ENCODE measurements at regions of chr10 and their contacts with region 1.

Region 1: GRCh38 chr10:72297968-72298773 is 24.4 kb downstream of the DDIT4 start:
- DNase-seq: peak; percentile 96
- H3K4me3 Mint-ChIP-seq: peak overlapping the region; percentile 73
- H3K27ac Mint-ChIP-seq: peak overlapping the region; percentile 97
- H3K4me1 Mint-ChIP-seq: peaks cover 66% of the 10 kb centered on the region
- H3K27me3 Mint-ChIP-seq: no peaks in the 10 kb centered on the region

Region 2: DNA sequence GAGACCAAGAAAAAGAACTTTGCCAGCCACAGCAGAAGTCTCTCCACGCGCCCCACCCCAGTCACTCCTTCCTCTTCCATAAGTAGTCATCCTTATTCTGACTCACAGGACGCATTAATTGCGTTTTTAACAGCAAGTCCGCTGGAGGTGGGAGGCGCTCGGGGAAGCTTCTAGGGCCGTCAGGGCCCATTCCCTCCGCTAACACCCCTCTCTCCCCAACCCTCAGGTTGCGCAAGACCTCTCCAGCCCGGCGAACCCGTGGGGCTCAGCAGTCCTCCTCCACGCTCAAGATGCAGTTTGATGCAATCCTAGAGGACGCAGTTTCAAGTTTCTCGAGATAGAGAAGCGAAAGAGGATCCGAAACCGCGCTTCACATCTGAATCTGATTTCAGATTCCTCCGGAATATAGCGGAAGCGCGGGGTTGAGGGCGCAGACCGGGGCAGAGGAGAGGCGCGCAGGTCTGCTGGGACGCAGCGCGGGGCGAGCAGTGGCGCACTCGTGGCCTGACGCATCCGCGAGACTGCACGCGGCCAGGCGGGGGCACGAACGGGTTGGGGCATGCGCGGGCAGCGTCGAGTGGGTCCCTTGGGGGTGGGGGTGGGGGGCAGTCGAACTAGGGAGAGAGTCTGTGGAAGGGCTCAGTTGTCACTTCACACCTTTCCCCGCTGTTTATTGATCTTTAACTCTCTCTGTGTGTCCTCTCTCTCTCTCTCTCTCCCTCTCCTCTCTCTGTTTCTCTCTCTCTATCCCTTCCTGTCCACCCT is 409.4 kb before region 1 on chr10:
- CTCF ChIA-PET with region 1: no interaction called
- POLR2A ChIA-PET with region 1: no interaction called
- DNase-seq: peak; percentile 63
- H3K4me3 Mint-ChIP-seq: peak overlapping the region; percentile 71
- H3K27ac Mint-ChIP-seq: no peak overlapping the region
- H3K4me1 Mint-ChIP-seq: peaks cover 10% of the 10 kb centered on the region
- H3K27me3 Mint-ChIP-seq: peaks cover 22% of the 10 kb centered on the region

Region 3: DNA sequence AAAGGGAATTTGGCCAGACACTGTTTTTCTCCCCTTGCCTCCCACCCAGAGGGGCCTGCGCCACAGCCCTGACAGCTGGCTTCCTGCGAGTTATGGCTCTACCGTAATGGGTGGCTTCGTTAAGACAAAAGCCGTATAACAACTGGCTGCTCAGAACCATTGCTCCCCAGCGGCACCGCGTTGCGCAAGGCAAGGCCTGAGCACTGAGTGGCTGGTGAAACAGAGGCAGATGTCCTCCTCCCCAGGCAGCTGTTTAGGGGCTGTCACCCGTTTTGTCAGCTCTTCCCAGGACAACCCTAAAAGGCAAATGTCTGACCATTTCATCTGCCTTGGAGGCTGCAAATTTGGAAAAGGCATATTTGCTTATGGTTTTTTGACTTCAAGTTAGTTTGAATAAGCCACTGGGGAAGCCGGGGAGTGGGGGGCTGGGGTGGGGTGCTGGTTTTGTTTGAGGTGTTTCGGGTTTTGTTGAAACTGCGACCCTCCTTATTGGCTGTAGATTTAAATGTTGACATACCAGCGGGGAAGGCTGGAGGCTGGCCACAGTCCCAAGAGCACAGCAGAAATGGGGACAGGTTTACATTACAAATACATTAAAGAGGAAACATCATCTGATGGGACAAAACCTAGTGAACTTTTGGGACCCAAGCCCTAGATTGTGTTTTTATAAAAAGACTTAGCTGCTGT is 209.1 kb before region 1 on chr10:
- CTCF ChIA-PET with region 1: no interaction called
- POLR2A ChIA-PET with region 1: interaction called, 22 read pairs
- DNase-seq: peak; percentile 68
- H3K4me3 Mint-ChIP-seq: peak overlapping the region; percentile 100
- H3K27ac Mint-ChIP-seq: peak overlapping the region; percentile 100
- H3K4me1 Mint-ChIP-seq: peaks cover 54% of the 10 kb centered on the region
- H3K27me3 Mint-ChIP-seq: no peaks in the 10 kb centered on the region

Region 4: GRCh38 chr10:72248468-72249151 is 49.6 kb before region 1 on chr10:
- CTCF ChIA-PET with region 1: interaction called, 9 read pairs
- POLR2A ChIA-PET with region 1: interaction called, 47 read pairs
- DNase-seq: peak; percentile 86
- H3K4me3 Mint-ChIP-seq: peak overlapping the region; percentile 73
- H3K27ac Mint-ChIP-seq: peak overlapping the region; percentile 96
- H3K4me1 Mint-ChIP-seq: peaks cover 78% of the 10 kb centered on the region
- H3K27me3 Mint-ChIP-seq: no peaks in the 10 kb centered on the region

Region 5: GRCh38 chr10:72260588-72261322 is 37.4 kb before region 1 on chr10:
- CTCF ChIA-PET with region 1: interaction called, 14 read pairs
- POLR2A ChIA-PET with region 1: interaction called, 59 read pairs
- DNase-seq: peak; percentile 95
- H3K4me3 Mint-ChIP-seq: peak overlapping the region; percentile 79
- H3K27ac Mint-ChIP-seq: peak overlapping the region; percentile 98
- H3K4me1 Mint-ChIP-seq: peaks cover 65% of the 10 kb centered on the region
- H3K27me3 Mint-ChIP-seq: no peaks in the 10 kb centered on the region

Region 6: DNA sequence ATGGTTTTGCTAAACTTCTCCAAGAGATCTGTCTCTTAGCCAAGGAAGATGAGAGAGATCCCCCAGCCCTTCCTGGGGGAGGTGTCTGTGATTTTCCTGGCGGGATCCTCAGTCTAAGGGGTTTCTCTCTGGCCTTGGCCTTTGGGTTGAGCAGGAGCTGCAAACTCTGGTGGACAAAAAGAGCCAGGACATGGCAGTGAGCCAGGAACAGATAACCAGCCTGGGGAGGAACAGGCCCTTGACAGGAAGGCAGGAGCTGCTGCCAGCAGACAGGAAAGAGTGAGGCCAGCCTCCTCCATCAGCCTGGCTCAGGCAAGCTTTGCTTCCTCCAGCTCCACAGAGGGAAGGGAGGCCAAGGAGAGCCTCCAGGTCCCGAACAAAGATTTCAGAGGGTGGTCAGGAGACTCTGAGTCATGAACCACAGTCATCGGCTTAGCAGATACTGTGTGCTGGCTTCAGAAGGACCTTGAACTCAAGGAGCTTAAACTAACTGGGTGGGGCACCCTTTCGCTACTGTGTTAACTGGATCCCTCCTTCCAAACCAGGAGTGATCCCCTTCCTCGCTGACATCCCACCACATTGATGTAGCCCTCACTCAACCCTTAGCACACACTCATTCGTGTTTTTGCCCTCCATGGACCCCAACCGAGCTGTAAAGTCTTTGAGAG is 10.3 kb after region 1 on chr10:
- CTCF ChIA-PET with region 1: interaction called, 4 read pairs
- POLR2A ChIA-PET with region 1: interaction called, 448 read pairs
- DNase-seq: peak; percentile 55
- H3K4me3 Mint-ChIP-seq: no peak overlapping the region
- H3K27ac Mint-ChIP-seq: peak overlapping the region; percentile 76
- H3K4me1 Mint-ChIP-seq: peaks cover 67% of the 10 kb centered on the region
- H3K27me3 Mint-ChIP-seq: no peaks in the 10 kb centered on the region

Measured in activated CD4-positive, alpha-beta memory T cell treated with anti-CD3 and anti-CD28 coated beads, Interleukin-2, amount 10 ng/mL, durations not matched to agents 7 days and 5 days (primary cell).